ENCODE measurements at regions of chr19 and their contacts with region 1.

Region 1: DNA sequence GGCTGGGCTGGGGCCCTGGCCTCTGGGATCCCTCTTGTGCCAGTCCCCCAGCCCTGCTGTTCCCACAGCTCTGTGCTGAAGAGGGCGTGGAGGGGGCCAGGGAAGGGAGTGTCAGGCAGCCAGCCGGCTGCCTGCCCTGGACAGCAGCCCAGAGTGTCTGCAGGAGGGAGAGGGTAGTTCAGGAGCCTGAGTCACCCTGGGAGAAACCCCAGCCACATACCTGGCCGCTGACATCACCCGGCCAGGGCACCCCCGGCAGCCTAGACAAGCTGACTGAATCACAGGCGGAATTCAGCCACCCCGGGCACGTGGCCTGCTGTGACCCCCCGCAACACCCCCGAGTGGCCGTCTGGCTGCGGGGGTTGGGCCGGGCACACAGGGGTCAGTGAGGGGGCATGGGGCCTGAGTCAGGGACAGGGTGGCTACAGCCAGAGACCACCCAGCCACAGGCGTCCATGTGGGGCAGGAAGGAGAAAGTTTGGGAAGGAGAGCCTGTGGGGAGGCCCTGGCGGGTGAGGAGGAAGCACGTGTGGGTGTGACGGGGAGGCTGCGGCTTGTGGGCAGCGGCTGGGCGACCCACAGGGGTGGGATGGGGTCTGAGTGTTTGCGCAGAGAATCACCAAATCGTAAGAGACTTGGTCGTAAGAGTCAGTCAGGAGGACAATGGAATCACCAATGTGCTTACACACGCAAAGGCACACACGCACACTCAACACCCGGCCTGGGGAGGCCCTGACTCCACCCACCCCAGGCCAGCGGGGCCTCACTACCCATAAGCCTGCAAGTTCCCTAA is 11.9 kb upstream of the FOSB start:
- DNase-seq: peak in 11 of 14 experiments; percentile 32 to 93 (median 49)
- ATAC-seq: peak; percentile 32
- H3K4me3 ChIP-seq: no peak overlapping the region
- H3K4me3 Mint-ChIP-seq: peak overlapping the region; percentile 38
- H3K27ac ChIP-seq: no peak overlapping the region
- H3K27ac Mint-ChIP-seq: peak overlapping the region; percentile 70
- H3K4me1 ChIP-seq: peaks cover 37% of the 10 kb centered on the region
- H3K4me1 Mint-ChIP-seq: peaks cover 36% of the 10 kb centered on the region
- H3K27me3 ChIP-seq: peaks cover 0 to 2% of the 10 kb centered on the region in 2 experiments
- H3K27me3 Mint-ChIP-seq: no peaks in the 10 kb centered on the region
- CTCF ChIP-seq: no peak

Region 2: GRCh38 chr19:45469132-45469944 is 13.4 kb after region 1 on chr19:
- CTCF ChIA-PET with region 1: interaction called, 6 read pairs
- POLR2A ChIA-PET with region 1: interaction called, 38 read pairs
- intact Hi-C with region 1: loop called (anchors 1 kb)
- DNase-seq: peak; percentile 80 to 97 (median 92)
- ATAC-seq: peak; percentile 63
- H3K4me3 ChIP-seq: peak overlapping the region; percentile 94
- H3K4me3 Mint-ChIP-seq: peak overlapping the region; percentile 96
- H3K27ac ChIP-seq: peak overlapping the region; percentile 96 to 99
- H3K27ac Mint-ChIP-seq: peak overlapping the region; percentile 98
- H3K4me1 ChIP-seq: peaks cover 39% of the 10 kb centered on the region
- H3K4me1 Mint-ChIP-seq: peaks cover 35% of the 10 kb centered on the region
- H3K27me3 ChIP-seq: peaks cover 4 to 6% of the 10 kb centered on the region in 2 experiments
- H3K27me3 Mint-ChIP-seq: peaks cover 28% of the 10 kb centered on the region
- CTCF ChIP-seq: peak; percentile 22

Region 3: DNA sequence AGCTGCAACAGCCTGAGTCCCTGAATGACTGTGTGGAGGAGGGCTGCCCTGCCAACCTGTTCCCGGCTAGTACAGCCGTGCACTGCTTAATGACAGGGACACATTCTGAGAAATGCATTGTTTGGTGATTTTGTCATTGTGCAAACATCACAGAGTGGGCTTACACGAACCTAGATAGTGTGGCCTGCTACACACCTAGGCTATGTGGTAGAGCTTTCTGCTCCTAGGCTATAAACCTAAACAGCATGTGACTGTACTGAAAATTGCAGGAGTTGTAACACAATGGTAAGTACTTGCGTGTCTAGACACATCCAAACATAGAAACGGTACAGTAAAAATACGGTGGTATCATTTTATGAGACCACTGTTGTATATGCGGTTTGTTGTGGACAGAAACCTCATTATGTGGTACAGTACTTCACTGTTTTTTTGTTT is 86.3 kb after region 1 on chr19:
- CTCF ChIA-PET with region 1: no interaction called
- POLR2A ChIA-PET with region 1: no interaction called
- intact Hi-C with region 1: no loop called
- DNase-seq: no peak
- ATAC-seq: no peak
- H3K4me3 ChIP-seq: no peak overlapping the region
- H3K4me3 Mint-ChIP-seq: no peak overlapping the region
- H3K27ac ChIP-seq: no peak overlapping the region
- H3K27ac Mint-ChIP-seq: no peak overlapping the region
- H3K4me1 ChIP-seq: peaks cover 2% of the 10 kb centered on the region
- H3K4me1 Mint-ChIP-seq: no peaks in the 10 kb centered on the region
- H3K27me3 ChIP-seq: no peaks in the 10 kb centered on the region
- H3K27me3 Mint-ChIP-seq: no peaks in the 10 kb centered on the region
- CTCF ChIP-seq: no peak